Left cardiac atrium (tissue), 4 donors: ENCODE measurements at regions of chr6 and their contacts with region 1.

Region 1: GRCh38 chr6:30396833-30397479 is 52.0 kb downstream of the RPP21 start:
- DNase-seq: peak; percentile 89
- ATAC-seq: peak; percentile 96 to 98

Region 2: DNA sequence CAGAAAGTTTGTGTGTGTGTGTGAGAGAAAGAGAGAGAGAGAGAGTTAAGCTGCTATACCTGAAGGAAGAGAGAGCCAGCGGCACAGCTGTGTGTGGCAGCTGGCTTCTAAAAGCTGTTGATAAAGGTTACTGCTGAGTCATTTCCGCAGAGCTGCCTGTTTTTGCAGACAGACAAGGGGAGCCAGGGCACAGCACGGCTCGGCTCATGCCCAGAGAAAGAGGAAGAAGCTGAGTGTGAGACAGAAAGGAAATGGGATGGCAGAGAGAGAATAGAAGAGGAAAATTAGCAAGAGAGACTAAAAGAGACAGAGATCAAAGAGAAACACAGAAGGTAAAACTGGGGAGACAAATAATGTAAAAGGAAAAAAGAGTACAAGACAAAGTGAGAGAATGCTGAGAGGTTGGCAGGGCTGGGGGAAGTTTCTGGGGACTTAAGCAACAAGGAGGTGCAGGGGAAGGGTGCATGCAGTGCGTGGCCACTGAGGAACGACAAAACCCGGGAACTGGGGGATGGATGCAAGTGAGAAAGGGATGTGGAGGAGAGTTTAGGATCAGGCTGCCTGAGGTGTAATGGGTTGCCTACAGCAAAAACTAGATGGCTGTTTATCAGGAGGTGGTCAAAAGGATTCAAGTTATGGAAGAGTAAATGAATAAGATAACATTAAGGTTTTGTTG is 431.9 kb before region 1 on chr6:
- intact Hi-C with region 1: no loop called
- DNase-seq: peak; percentile 82
- ATAC-seq: peak; percentile 90 to 91

Region 3: GRCh38 chr6:30044630-30045029 is 352.3 kb before region 1 on chr6:
- intact Hi-C with region 1: no loop called
- DNase-seq: no peak
- ATAC-seq: peak in 1 of 2 donors; percentile 70

Region 4: DNA sequence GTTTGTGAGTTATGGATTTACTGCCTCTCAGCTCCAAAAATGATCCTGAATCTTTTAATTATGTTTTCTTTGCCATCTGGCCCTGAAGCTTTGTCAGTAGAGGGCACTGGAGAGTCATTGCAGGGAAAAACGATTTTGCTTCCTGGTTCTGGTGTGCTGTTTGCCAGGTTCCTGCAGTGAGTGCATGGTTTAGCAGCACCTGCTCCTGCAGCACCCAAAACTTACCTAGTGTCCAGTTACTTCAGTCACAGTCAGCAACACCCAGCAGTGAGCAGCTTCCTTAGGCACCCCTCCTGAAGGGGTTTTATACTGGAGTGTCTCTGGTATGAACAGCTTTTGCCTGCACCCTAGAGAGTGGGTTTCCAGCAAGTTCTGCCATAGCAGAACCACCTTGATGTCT is 177.7 kb before region 1 on chr6:
- intact Hi-C with region 1: loop called (anchors 5 to 10 kb)
- DNase-seq: no peak
- ATAC-seq: peak; percentile 28 to 44

Region 5: DNA sequence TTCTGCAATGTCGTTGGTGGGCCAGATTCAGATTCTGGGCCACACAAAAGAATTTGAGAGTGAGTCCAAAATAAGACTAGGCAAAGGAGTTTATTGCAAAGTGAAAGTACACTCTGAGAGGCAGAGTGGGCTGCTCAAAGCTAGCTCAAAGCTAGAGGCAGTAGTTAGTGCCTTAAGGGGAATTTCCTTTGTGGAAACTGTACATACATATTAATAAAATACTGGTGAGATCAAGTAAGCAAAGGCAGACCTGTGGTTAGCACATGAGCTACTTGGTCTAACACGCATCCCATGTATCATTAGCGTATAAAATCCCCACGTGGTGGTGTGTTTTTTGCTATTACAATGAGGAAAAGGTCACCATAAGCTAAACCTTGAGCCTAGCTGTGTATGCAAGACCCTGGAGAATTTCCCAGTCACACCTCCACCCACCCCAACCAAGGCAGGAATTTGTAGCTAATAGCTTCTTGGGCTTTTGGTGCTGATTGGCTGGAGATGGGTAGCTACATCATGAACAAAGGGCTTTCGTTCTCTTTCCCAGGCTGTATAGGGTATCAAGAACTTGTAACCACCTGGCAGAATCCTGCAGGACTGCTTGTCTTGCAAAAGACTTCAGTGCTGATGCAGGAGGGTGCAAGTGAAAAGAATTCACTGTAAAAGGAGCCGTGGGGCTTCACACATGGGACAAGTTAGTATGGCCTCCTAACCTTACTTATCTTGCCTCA is 169.0 kb before region 1 on chr6:
- intact Hi-C with region 1: loop called in 1 of 2 experiments (anchors 10 kb)
- DNase-seq: no peak
- ATAC-seq: no peak

Region 6: DNA sequence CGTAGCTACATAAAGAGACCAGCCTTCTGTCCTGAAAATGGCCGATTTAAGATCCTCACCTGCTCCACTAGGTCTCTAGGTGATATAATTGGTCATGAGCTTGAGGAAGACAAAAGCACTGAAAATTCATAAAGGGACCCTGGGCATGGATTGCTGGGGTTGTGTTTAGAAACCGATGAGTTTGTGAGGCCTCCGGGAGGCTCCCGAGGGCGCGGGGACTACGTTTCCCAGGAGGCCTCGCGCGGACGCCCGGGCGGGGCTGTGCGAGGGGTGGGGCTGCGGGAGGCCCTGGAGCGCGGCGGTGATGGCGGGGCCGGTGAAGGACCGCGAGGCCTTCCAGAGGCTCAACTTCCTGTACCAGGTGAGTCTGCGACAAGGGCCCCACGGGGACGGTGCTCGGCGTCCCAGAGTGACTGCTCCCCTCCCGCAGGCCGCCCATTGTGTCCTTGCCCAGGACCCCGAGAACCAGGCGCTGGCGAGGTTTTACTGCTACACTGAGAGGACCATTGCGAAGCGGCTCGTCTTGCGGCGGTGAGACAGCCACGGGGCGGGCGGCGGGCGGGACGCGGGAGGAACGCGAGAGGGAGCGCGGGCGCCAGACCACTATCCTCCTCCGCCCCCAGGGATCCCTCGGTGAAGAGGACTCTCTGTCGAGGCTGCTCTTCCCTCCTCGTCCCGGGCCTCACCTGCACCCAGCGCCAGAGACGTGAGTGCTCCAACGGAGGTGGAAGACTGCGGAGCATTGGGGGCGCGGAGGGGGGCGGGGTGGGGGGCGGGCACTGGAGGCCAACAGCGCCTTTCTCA is 51.9 kb before region 1 on chr6 and contains the start of gene RPP21:
- intact Hi-C with region 1: no loop called
- DNase-seq: peak; percentile 87
- ATAC-seq: peak; percentile 99 to 100
- total RNA-seq, gene RPP21: 21.0 to 26.2 TPM

Region 7: DNA sequence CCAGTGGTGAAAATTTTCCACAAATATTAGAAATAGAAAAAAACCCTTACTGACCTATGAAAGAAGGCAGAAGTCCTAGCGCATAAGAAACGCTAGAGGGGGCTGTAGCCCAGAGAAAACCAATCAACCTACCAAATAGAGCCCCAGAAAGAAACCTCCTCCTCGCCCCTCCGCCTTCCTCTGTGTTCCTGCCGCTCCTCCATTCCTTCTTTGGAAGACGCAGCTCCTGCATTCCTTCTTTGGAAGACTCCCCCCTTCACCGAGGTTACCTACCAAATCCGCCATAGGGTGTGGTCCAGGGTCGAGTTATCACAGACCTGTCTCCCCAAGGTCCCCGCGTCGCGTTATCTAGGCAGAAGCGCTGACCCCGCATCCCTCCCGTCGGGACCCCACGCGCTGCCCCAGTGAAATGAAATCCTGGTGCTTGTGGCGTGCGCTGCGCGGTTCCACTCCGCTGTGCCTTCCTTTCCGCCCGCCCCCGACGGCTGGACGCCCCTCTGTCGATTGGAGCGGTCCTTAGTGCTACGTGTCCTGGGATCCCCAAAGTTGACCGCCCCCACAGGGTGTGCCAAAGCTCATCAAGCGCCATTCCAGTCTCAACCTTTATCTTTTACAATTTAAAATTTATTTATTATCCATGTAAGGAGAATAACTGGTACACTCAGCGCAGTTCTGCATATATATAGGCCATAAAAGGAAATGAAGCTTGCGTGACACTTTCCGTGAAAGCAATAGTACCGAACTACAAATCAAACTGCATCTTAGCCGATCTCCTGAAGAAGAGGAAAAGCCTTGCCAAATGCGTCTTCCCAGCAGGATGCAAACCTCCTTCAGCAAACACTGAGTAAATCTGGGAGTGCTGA is 39.0 kb before region 1 on chr6:
- intact Hi-C with region 1: loop called in 1 of 2 experiments (anchors 5 kb)
- DNase-seq: peak; percentile 46
- ATAC-seq: peak; percentile 61 to 86